Right cardiac atrium (tissue), 5 donors: ENCODE measurements at regions of chr19 and their contacts with region 1.

Region 1: GRCh38 chr19:50461066-50461875 is 15.0 kb upstream of the EMC10 start:
- DNase-seq: peak in 2 of 3 donors; percentile 72 to 77
- ATAC-seq: peak; percentile 63 to 72
- H3K4me3 ChIP-seq: no peak overlapping the region
- H3K27ac ChIP-seq: no peak overlapping the region
- H3K4me1 ChIP-seq: no peaks in the 10 kb centered on the region
- H3K27me3 ChIP-seq: no peaks in the 10 kb centered on the region

Region 2: GRCh38 chr19:50357178-50358100 is 103.8 kb before region 1 on chr19:
- intact Hi-C with region 1: loop called in 2 of 4 experiments (anchors 5 to 10 kb)
- DNase-seq: peak; percentile 75 to 91 (median 89)
- ATAC-seq: peak; percentile 73 to 81
- H3K4me3 ChIP-seq: peak overlapping the region; percentile 45
- H3K27ac ChIP-seq: peak overlapping the region; percentile 96
- H3K4me1 ChIP-seq: no peaks in the 10 kb centered on the region
- H3K27me3 ChIP-seq: no peaks in the 10 kb centered on the region

Region 3: DNA sequence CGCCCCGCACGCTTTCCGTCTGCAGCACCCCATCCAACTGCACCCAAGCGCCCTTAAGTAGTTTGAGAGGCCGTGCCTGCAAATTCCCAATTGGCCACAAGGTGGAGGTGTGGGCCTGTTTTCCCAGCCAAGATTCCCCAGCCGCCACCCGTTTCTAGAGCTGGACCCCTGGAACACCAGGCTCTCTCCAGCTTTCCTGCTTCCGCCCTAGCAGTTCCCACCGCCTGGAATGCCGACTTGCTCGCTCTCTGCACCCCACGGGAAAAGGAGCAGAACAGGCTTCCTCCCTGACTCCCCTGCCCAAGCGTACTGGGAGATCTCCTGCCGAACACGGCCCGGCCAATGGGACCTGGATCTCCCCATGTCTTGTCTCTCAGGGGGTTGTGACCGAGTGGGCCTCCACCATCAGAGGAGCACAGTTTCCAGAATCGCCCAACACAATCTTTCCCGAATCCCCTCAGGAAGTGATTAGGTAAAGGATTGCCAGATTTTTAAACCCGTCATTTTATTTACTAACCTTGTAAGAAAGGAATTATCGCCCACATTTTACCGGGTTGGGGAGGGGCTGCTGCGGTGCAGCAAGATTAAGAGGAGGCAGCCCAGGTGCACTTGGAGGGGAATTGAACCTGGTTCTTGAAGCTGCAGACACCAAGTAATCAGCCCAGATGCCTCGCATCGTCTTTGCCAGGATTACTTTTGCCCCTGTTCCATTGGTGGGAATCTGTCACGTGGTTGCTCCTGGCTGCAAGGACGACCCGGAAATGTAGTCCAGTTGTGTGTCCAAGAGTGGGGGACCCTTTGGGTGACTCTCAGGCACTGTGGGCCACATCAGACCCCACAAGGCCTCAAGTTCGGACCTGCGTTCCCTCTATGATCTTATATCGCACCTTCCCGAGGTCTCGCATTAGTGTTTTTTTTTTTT is 92.4 kb before region 1 on chr19:
- intact Hi-C with region 1: loop called in 3 of 4 experiments (anchors 5 to 10 kb)
- DNase-seq: peak; percentile 79 to 93 (median 90)
- ATAC-seq: peak; percentile 94 to 96
- H3K4me3 ChIP-seq: peak overlapping the region; percentile 78
- H3K27ac ChIP-seq: peak overlapping the region; percentile 91
- H3K4me1 ChIP-seq: no peaks in the 10 kb centered on the region
- H3K27me3 ChIP-seq: no peaks in the 10 kb centered on the region